Vagina (tissue), 2 donors: ENCODE measurements at regions of chr1 and their contacts with region 1.

Region 1: GRCh38 chr1:89804642-89805237 is 16.1 kb upstream of the LRRC8D start:
- DNase-seq: no peak
- H3K4me3 ChIP-seq: no peak overlapping the region
- H3K27ac ChIP-seq: no peak overlapping the region
- H3K4me1 ChIP-seq: peaks cover 6% of the 10 kb centered on the region
- H3K27me3 ChIP-seq: no peaks in the 10 kb centered on the region
- CTCF ChIP-seq: peak; percentile 70 to 91 (median 82)
- POLR2A ChIP-seq: no peak

Region 2: GRCh38 chr1:89855413-89856123 is 50.8 kb after region 1 on chr1:
- intact Hi-C with region 1: no loop called
- DNase-seq: no peak
- H3K4me3 ChIP-seq: no peak overlapping the region
- H3K27ac ChIP-seq: no peak overlapping the region
- H3K4me1 ChIP-seq: no peaks in the 10 kb centered on the region
- H3K27me3 ChIP-seq: no peaks in the 10 kb centered on the region
- CTCF ChIP-seq: no peak
- POLR2A ChIP-seq: no peak

Region 3: GRCh38 chr1:89994805-89995597 is 190.3 kb after region 1 on chr1 and contains the start of gene ZNF326:
- intact Hi-C with region 1: loop called (anchors 5 kb)
- DNase-seq: peak in 1 of 2 donors; percentile 97
- H3K4me3 ChIP-seq: peak within 1 kb of the TSS; percentile 64 to 91
- H3K27ac ChIP-seq: peak within 1 kb of the TSS; percentile 96
- H3K4me1 ChIP-seq: peaks cover 43% of the 10 kb centered on the region
- H3K27me3 ChIP-seq: no peaks in the 10 kb centered on the region
- CTCF ChIP-seq: peak in 1 of 3 experiments; percentile 29
- POLR2A ChIP-seq: peak in 1 of 2 donors; percentile 94
- total RNA-seq, gene ZNF326: 12.8 TPM